BJ (cell line): ENCODE measurements at regions of chr7 and their contacts with region 1.

Region 1: GRCh38 chr7:33895025-33895804 is 10.1 kb upstream of the BMPER start:
- DNase-seq: no peak
- H3K4me3 ChIP-seq: no peak overlapping the region
- H3K27me3 ChIP-seq: no peaks in the 10 kb centered on the region
- CTCF ChIP-seq: peak; percentile 94

Region 2: GRCh38 chr7:33716581-33717477 is 178.4 kb before region 1 on chr7:
- CTCF ChIA-PET with region 1: interaction called, 12 read pairs
- POLR2A ChIA-PET with region 1: no interaction called
- DNase-seq: no peak
- H3K4me3 ChIP-seq: no peak overlapping the region
- H3K27me3 ChIP-seq: no peaks in the 10 kb centered on the region
- CTCF ChIP-seq: peak; percentile 63

Region 3: GRCh38 chr7:33764752-33765451 is 130.3 kb before region 1 on chr7:
- CTCF ChIA-PET with region 1: interaction called, 15 read pairs
- POLR2A ChIA-PET with region 1: no interaction called
- DNase-seq: no peak
- H3K4me3 ChIP-seq: no peak overlapping the region
- H3K27me3 ChIP-seq: no peaks in the 10 kb centered on the region
- CTCF ChIP-seq: no peak

Region 4: DNA sequence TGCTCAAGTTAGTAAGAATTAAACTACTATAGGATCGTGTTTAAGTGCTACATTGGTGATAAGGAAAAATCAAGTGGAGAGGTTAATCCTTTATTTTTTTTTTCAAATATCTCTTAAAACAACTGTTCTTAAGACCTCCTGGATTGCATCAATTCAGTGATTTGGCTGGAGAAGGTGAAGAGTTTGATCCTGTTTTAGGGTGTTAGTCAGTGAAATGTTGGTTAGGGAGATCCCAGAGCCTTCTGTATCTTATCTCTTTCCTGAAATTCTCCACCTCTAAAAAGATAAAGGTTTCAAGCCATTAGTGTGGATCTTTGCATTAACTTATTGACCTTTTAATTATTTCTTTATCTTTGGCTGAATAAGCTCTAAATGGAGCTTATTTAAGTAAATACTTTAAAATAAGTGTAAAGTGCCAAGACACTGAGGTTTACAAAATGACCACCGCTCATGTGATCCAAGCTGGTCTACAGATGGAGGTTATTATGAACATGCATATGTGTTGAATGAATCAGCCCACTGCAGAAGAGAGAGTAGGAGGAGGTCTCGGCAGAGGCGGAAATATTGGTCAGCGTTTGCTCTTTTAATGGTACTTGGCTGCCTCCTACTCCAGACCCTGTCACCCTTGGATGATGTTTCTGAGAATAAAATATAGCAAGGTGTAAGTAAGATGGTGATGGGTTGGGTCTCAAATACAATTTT is 41.7 kb before region 1 on chr7:
- CTCF ChIA-PET with region 1: interaction called, 10 read pairs
- POLR2A ChIA-PET with region 1: no interaction called
- DNase-seq: peak; percentile 75
- H3K4me3 ChIP-seq: no peak overlapping the region
- H3K27me3 ChIP-seq: no peaks in the 10 kb centered on the region
- CTCF ChIP-seq: no peak

Region 5: DNA sequence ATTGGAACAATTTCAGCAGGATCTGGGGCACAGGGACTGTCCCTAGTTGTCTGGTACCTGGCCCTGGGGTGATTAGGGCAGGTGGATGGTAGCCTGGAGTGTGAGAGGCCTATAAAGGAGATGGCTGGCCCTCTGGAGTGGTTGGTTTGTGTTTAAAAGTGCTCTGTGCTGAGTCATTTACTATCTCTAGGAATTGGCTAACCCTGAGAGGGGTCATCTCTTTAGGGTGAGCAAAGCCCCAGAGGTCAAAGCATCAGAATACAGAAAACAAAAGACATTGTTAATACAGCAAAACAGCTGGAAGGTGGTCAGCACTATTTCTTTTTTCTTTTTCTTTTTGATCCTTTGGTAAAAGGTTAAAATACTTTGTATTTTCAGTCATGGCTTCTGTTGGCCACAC is 33.3 kb before region 1 on chr7:
- CTCF ChIA-PET with region 1: interaction called, 10 read pairs
- POLR2A ChIA-PET with region 1: no interaction called
- DNase-seq: no peak
- H3K4me3 ChIP-seq: no peak overlapping the region
- H3K27me3 ChIP-seq: no peaks in the 10 kb centered on the region
- CTCF ChIP-seq: no peak